Lower leg skin (tissue), 4 donors: ENCODE measurements at regions of chr5 and their contacts with region 1.

Region 1: GRCh38 chr5:25944786-25945185 is 1093.6 kb downstream of the CDH9 start:
- DNase-seq: no peak
- H3K4me3 ChIP-seq: no peak overlapping the region
- CTCF ChIP-seq: no peak
- POLR2A ChIP-seq: no peak

Region 2: DNA sequence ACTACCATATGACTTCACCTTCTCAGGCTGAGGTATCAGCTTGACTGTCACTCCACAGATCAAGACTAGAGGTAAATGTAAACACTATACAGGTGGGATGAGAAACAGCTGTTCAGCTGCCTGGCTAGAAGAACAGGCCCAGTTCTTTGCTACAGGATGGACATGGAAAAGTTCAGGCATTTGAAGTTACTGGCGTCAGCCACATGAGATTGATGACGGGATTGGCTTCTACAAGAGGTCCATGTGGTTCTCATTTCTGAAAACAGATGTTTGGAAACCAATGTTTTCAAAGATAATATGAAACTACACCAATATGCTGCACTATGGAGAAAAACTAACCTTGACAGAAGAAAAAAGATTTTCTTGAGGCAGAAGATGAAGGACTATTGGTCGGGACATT is 1624.1 kb before region 1 on chr5:
- intact Hi-C with region 1: no loop called
- DNase-seq: no peak
- H3K4me3 ChIP-seq: no peak overlapping the region
- CTCF ChIP-seq: no peak
- POLR2A ChIP-seq: no peak

Region 3: DNA sequence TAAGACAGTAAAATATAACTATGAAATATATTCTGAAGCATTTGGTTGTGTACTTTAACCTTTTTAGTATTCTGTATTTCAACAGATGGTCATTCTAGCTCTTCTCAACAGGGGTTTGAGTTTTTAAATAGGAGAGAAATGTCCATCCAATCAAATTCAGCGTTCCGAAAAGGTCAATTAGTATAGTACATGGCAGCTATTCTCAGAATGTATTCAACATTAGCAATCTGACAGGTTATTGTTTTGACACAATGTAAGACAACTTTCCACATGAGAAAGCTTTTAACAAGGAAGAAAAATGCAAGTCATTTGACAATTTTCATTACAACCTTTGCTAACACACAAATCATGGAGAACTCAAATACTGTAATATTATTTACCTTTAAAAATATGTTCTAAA is 303.7 kb before region 1 on chr5:
- intact Hi-C with region 1: loop called (anchors 5 kb)
- DNase-seq: no peak
- H3K4me3 ChIP-seq: no peak overlapping the region
- CTCF ChIP-seq: no peak
- POLR2A ChIP-seq: no peak

Region 4: DNA sequence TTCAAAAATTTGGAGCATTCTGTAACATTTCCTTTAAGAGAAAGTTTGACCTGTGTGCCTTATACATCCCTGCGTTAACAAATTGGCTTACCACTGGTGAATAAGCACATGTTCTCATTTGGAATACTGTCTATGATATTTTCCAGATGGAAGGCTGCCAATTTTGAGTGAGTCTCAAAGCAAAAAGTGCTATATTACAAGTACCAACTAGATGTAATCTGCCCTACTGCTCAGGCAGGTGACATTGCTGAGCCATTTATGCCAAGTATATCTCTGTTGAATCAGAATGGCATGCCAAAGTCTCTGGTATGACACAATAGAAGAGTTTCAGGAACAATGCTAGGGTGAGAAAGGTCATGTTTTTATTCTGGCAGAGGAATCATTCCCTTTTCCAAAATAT is 737.0 kb after region 1 on chr5:
- intact Hi-C with region 1: no loop called
- DNase-seq: no peak
- H3K4me3 ChIP-seq: no peak overlapping the region
- CTCF ChIP-seq: no peak
- POLR2A ChIP-seq: no peak